ENCODE measurements at regions of chr6 and their contacts with region 1.

Region 1: GRCh38 chr6:41735427-41736356 is at the start of gene TFEB:
- DNase-seq: peak; percentile 92
- H3K27ac ChIP-seq: peak within 1 kb of the TSS; percentile 98
- CTCF ChIP-seq: peak; percentile 97

Region 2: GRCh38 chr6:41705996-41706835 is 29.5 kb before region 1 on chr6:
- CTCF ChIA-PET with region 1: interaction called, 11 read pairs
- POLR2A ChIA-PET with region 1: interaction called, 6 read pairs
- DNase-seq: peak; percentile 80
- H3K27ac ChIP-seq: peak overlapping the region; percentile 96
- CTCF ChIP-seq: peak; percentile 66; the same call in 1 of the 2 replicates

Region 3: DNA sequence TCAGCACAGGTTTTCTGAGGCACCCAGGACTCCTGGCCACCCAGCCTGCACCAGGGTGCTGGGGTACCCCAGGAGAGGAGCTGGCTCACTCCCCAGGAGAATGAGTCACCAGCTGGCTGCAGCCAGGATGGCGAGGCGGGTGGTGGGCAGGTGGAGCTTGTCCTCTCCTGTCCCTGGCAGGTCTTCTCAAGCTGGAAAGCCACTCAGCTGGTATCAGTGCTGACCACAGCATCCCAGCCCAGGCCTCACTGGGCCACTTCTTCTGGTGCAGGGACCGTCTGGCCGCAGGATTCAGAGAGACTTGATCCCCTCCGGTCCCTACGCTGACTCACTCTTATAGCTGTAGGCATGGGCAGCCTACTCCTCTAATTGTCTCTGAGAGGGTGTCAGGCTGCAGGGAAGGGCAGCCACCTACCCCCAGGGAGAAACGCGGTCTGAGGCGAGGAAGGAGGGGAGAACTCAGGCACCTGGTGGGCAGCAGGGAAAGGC is 22.5 kb before region 1 on chr6:
- CTCF ChIA-PET with region 1: interaction called, 10 read pairs
- POLR2A ChIA-PET with region 1: interaction called, 5 read pairs
- DNase-seq: peak; percentile 97
- H3K27ac ChIP-seq: peak overlapping the region; percentile 100
- CTCF ChIP-seq: no peak

Region 4: DNA sequence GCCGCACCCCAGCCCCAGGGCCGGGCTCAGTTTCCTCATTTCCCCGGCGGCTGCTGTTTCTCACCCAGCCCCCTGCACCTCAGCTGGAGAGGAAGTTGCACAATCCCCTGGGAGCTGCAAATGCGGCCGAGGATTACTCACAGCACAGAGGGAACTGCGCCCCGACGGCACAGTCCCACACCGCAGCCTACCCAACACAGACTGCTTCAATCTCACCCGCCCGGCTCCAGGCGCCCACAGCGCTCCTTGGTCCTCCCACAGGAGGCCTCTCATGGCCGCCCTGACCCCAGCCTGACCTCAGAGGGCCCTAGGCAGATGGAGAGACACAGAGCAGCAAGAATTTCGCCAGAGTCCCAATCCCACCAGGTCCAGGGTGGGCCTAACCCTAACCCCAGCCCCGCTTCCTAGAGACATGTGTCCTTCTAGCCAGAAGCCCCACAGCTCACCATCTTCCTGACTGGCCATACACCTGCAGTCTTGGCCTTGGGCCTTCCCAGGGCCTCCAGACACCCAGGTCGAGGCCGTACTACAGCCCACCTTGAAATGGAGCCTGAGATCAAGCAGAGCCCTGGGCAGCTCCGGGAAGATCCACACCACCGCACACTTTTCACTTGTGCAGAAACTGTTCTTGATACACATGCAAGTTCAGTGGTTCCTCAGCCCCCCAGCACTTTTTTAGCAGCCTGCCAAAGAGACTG is 12.0 kb before region 1 on chr6:
- CTCF ChIA-PET with region 1: interaction called, 8 read pairs
- POLR2A ChIA-PET with region 1: interaction called, 11 read pairs
- DNase-seq: peak; percentile 97
- H3K27ac ChIP-seq: peak overlapping the region; percentile 96
- CTCF ChIP-seq: no peak

Region 5: GRCh38 chr6:41917528-41917927 is 181.8 kb after region 1 on chr6:
- CTCF ChIA-PET with region 1: no interaction called
- POLR2A ChIA-PET with region 1: no interaction called
- DNase-seq: peak; percentile 86
- H3K27ac ChIP-seq: peak overlapping the region; percentile 89
- CTCF ChIP-seq: no peak

Measured in RWPE1 (cell line).